Mammary epithelial cell (primary cell): ENCODE measurements at regions of chr17 and their contacts with region 1.

Region 1: GRCh38 chr17:903981-904481 is 75.5 kb downstream of the NXN start:
- DNase-seq: peak; percentile 94
- H3K4me3 ChIP-seq: peak overlapping the region in 1 of 3 experiments; percentile 12
- H3K27ac ChIP-seq: peak overlapping the region; percentile 86
- H3K4me1 ChIP-seq: peaks cover 40% of the 10 kb centered on the region
- H3K27me3 ChIP-seq: no peaks in the 10 kb centered on the region
- CTCF ChIP-seq: no peak

Region 2: GRCh38 chr17:841313-841712 is 62.7 kb before region 1 on chr17:
- CTCF ChIA-PET with region 1: no interaction called
- dilution Hi-C with region 1: loop called (anchors 5 kb)
- in situ Hi-C with region 1: no loop called
- intact Hi-C with region 1: no loop called
- DNase-seq: no peak
- H3K4me3 ChIP-seq: no peak overlapping the region
- H3K27ac ChIP-seq: no peak overlapping the region
- H3K4me1 ChIP-seq: no peaks in the 10 kb centered on the region
- H3K27me3 ChIP-seq: no peaks in the 10 kb centered on the region
- CTCF ChIP-seq: no peak

Region 3: DNA sequence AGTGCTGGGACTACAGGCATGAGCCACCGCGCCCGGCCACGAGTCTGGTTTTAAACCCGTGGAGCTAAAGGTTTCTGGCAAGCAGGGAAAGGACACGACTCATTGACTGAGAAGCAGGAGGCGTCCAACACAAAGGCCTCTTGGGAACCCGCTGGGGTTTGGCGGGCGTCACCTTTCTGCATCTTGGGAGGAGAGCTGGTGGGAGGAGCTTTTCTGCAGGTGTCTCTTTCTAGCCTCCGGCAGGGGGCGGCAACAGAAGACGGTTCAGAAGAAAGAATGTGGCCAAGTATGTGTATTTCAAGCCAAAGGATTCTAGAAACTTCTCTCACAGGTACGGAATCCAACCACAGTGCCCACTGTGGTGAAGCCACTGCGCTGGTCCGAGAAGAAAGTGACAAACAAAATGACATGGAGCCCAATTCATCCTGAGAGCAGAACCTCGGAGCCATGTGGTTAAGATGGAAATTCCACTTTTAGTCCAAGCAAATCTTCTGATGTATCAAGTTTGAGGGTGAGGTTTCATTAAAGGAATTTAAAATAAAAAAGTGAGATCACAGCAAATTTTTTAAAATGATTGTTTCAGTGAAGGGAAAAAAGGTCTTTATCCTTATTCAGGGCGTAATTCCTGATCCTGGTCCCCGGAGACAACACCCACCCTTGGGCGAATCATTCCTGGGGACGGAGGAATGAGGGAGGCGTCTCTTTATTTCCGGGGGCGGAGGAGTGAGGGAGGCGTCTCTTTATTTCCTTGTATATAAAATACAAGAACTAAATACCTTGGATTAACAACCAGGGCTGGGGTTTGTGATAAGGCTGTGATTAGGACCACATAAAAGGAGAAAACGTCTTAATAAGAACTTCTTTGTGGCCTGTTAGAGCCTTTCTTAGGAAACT is 24.2 kb before region 1 on chr17:
- CTCF ChIA-PET with region 1: no interaction called
- dilution Hi-C with region 1: no loop called
- in situ Hi-C with region 1: no loop called
- intact Hi-C with region 1: loop called (anchors 1 kb)
- DNase-seq: peak; percentile 91
- H3K4me3 ChIP-seq: no peak overlapping the region
- H3K27ac ChIP-seq: peak overlapping the region; percentile 72
- H3K4me1 ChIP-seq: peaks cover 25% of the 10 kb centered on the region
- H3K27me3 ChIP-seq: no peaks in the 10 kb centered on the region
- CTCF ChIP-seq: peak; percentile 54 to 65

Region 4: GRCh38 chr17:927611-928461 is 23.8 kb after region 1 on chr17:
- CTCF ChIA-PET with region 1: no interaction called
- dilution Hi-C with region 1: no loop called
- in situ Hi-C with region 1: no loop called
- intact Hi-C with region 1: loop called (anchors 2 kb)
- DNase-seq: peak; percentile 87
- H3K4me3 ChIP-seq: peak overlapping the region in 1 of 3 experiments; percentile 1
- H3K27ac ChIP-seq: peak overlapping the region; percentile 95
- H3K4me1 ChIP-seq: peaks cover 66% of the 10 kb centered on the region
- H3K27me3 ChIP-seq: no peaks in the 10 kb centered on the region
- CTCF ChIP-seq: no peak

Region 5: GRCh38 chr17:951325-952132 is 47.5 kb after region 1 on chr17:
- CTCF ChIA-PET with region 1: no interaction called
- dilution Hi-C with region 1: no loop called
- in situ Hi-C with region 1: no loop called
- intact Hi-C with region 1: loop called (anchors 1 kb)
- DNase-seq: peak; percentile 65
- H3K4me3 ChIP-seq: no peak overlapping the region
- H3K27ac ChIP-seq: peak overlapping the region; percentile 54
- H3K4me1 ChIP-seq: peaks cover 29% of the 10 kb centered on the region
- H3K27me3 ChIP-seq: no peaks in the 10 kb centered on the region
- CTCF ChIP-seq: no peak